Right ventricle myocardium inferior (tissue), 1 donor: ENCODE measurements at regions of chr11 and their contacts with region 1.

Region 1: DNA sequence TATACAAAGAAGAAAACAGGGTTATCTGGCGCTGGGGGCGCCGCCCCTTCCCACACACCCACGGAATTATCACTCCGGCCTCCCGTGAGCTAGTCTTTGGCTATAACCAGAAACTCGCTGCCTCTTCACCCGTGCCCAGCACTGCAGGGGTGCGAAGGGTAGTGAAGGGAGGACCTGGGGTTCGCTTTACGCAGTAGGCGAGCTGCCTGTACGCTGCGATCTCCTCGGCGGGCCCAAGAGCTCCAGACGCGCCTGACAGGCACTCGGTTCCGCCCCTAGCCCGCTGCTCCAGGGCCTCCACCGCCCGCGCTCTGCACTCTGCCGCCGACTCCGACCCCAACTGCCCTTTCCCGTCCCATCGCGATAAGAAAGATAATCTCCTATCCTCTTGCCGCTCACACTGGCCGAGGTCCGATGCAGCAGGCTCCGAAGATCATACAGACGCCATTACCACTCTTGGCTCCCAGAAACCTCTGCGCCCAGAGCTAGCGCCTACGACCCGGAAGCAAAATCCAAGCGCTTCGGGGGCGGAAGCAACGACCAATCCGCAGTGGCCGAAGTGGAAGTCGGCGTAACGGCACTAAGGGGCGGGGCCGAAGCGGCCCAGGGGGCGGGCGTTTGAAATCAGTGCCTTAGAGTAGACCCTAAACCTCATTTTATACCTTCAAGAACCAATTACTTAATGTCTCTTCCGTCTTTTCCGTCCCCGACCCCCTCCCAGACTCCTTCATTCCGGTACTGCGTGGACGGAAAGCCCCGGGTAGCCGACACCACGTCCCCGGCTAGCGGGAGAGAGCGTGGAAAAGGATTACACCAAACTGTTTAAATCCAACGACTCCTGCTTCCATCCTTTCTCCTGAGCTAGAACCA is at the starts of genes CWC15 and KDM4D:
- DNase-seq: peak; percentile 97
- ATAC-seq: peak; percentile 100
- total RNA-seq, gene CWC15: 79.1 TPM
- total RNA-seq, gene KDM4D: 0.54 TPM

Region 2: GRCh38 chr11:94851864-94852636 is 121.3 kb before region 1 on chr11:
- intact Hi-C with region 1: no loop called
- DNase-seq: no peak
- ATAC-seq: no peak

Region 3: GRCh38 chr11:95778699-95779098 is 805.4 kb after region 1 on chr11:
- intact Hi-C with region 1: loop called (anchors 10 kb)
- DNase-seq: no peak
- ATAC-seq: no peak